GM10248 (cell line): ENCODE measurements at regions of chr1 and their contacts with region 1.

Region 1: GRCh38 chr1:203273206-203273868 is 32.0 kb upstream of the BTG2 start:
- DNase-seq: peak; percentile 76
- CTCF ChIP-seq: peak; percentile 99

Region 2: DNA sequence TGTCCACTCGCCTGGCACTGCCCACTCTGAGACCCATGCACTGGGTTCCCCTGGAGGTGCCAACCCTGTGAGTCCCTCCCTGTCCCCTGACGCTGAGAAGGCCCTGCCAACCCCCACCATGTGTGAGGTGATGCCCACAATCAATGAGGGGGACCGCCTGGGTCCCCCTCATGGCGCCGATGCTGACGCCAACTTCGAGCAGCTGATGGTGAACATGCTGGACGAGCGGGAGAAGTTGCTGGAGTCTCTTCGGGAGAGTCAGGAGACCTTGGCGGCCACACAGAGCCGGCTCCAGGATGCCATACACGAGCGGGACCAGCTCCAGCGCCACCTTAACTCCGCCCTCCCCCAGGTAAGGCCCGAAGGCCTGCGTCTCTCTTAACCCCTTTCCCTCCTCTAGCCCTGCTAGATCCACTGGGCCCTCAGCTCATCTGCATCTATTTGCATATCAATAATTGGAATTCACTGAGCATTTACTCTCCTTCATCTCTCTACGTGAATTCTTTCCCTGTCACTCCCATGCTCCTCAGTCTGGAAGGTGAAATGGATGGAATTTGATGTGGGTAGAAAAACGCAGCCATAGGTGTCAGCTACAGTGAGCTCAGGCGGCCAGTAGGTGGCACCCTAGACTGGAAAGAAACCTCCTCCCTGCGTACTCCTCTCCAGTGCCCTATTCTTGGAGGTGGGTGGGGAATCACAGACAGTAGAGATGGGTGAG is 234.3 kb before region 1 on chr1:
- CTCF ChIA-PET with region 1: interaction called, 95 read pairs
- POLR2A ChIA-PET with region 1: no interaction called
- DNase-seq: peak; percentile 77
- CTCF ChIP-seq: peak; percentile 90

Region 3: GRCh38 chr1:203290261-203291089 is 17.1 kb after region 1 on chr1:
- CTCF ChIA-PET with region 1: interaction called, 291 read pairs
- POLR2A ChIA-PET with region 1: interaction called, 5 read pairs
- DNase-seq: peak; percentile 91
- CTCF ChIP-seq: no peak

Region 4: GRCh38 chr1:203299169-203299568 is 25.8 kb after region 1 on chr1:
- CTCF ChIA-PET with region 1: interaction called, 291 read pairs
- POLR2A ChIA-PET with region 1: interaction called, 4 read pairs
- DNase-seq: no peak
- CTCF ChIP-seq: no peak

Region 5: DNA sequence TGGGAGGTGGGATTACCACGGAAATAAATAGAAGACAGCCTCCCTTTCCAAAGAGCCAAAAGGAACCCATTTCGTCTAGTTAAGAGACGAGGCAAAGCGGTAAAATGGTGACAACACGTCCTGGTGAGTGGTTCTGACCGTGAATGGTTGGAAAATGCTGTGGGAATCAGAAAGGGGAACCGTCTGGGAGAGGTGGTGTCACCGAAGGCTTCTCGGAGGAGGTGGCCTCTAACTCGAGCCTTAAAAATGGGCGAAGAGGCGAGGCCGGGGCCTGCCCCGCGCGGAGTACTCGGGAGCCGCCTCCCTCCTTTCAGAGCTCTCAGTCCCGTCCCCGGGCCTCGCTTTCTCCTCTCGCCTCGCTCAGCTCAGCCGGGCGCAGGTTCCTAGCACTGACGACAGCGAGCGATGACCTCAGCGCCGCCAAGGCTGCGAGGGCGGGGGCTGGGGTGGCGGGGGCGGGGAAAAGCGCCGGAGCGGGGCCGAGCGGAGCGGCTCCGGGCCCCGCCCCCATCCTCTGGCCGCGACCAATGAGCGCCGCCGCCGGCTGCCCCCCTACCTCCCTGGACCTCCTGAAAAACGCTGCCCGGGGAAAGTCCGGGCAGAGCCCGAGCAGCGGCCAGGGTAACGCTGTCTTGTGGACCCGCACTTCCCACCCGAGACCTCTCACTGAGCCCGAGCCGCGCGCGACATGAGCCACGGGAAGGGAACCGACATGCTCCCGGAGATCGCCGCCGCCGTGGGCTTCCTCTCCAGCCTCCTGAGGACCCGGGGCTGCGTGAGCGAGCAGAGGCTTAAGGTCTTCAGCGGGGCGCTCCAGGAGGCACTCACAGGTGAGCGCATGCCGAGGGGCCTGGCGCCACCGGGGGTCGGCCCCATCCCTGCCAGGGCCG is 31.8 kb after region 1 on chr1 and contains the start of gene BTG2:
- CTCF ChIA-PET with region 1: interaction called, 228 read pairs
- POLR2A ChIA-PET with region 1: interaction called, 25 read pairs
- DNase-seq: peak; percentile 96
- CTCF ChIP-seq: no peak

Region 6: GRCh38 chr1:203320591-203321272 is 47.4 kb after region 1 on chr1:
- CTCF ChIA-PET with region 1: interaction called, 179 read pairs
- POLR2A ChIA-PET with region 1: interaction called, 5 read pairs
- DNase-seq: peak; percentile 67
- CTCF ChIP-seq: no peak

Region 7: GRCh38 chr1:203326830-203327683 is 53.7 kb after region 1 on chr1:
- CTCF ChIA-PET with region 1: interaction called, 690 read pairs
- POLR2A ChIA-PET with region 1: interaction called, 7 read pairs
- DNase-seq: peak; percentile 95
- CTCF ChIP-seq: peak; percentile 1